Activated CD4-positive, alpha-beta T cell treated with anti-CD3 and anti-CD28 coated beads for 36 hours (primary cell): ENCODE measurements at regions of chr14 and their contacts with region 1.

Region 1: GRCh38 chr14:105020815-105021655 is at the start of gene CDCA4:
- DNase-seq: peak; percentile 99
- ATAC-seq: peak; percentile 82
- H3K4me3 Mint-ChIP-seq: peak within 1 kb of the TSS; percentile 94
- H3K27ac Mint-ChIP-seq: peak within 1 kb of the TSS; percentile 93
- H3K4me1 Mint-ChIP-seq: peaks cover 72% of the 10 kb centered on the region
- H3K27me3 Mint-ChIP-seq: no peaks in the 10 kb centered on the region
- total RNA-seq, gene CDCA4: 52.0 to 62.7 TPM

Region 2: GRCh38 chr14:104689109-104689880 is 331.7 kb before region 1 on chr14 and contains the start of gene INF2:
- CTCF ChIA-PET with region 1: no interaction called
- POLR2A ChIA-PET with region 1: no interaction called
- intact Hi-C with region 1: loop called in 1 of 2 experiments (anchors 1 kb)
- DNase-seq: peak; percentile 73
- ATAC-seq: peak; percentile 69
- H3K4me3 Mint-ChIP-seq: peak within 1 kb of the TSS; percentile 72
- H3K27ac Mint-ChIP-seq: peak within 1 kb of the TSS; percentile 60
- H3K4me1 Mint-ChIP-seq: peaks cover 34% of the 10 kb centered on the region
- H3K27me3 Mint-ChIP-seq: no peaks in the 10 kb centered on the region
- total RNA-seq, gene INF2: 60.8 to 66.0 TPM

Region 3: DNA sequence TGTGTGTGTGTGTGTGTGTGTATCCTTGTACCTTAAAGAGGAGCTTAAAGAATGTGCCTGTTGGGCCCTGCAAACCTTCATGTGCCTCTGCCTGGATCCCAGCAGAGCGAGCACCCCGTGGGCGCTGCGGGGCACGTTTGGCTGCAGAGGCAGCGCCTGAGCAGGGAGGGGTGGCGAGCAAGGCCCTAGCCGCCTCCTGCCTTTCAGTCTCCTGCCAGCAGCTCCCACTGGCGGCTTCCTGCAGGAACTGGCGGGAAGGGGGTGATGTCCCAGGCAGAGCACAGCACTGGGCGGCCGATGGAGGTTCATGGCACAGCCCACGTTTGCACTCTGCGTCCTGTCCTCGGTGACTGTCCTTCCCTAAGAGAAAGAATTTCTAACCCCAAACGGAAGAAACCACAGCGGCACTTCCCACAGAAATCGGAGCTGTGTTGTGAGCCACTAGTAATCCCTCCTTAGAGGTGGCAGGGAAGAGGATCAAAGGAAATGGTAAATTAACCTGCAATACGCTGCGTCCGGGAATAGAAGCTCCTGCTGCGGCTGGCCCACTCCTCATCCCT is 200.3 kb before region 1 on chr14:
- CTCF ChIA-PET with region 1: no interaction called
- POLR2A ChIA-PET with region 1: no interaction called
- intact Hi-C with region 1: no loop called
- DNase-seq: no peak
- ATAC-seq: no peak
- H3K4me3 Mint-ChIP-seq: no peak overlapping the region
- H3K27ac Mint-ChIP-seq: no peak overlapping the region
- H3K4me1 Mint-ChIP-seq: peaks cover 3% of the 10 kb centered on the region
- H3K27me3 Mint-ChIP-seq: peaks cover 11% of the 10 kb centered on the region

Region 4: GRCh38 chr14:104976198-104977007 is 44.6 kb before region 1 on chr14:
- CTCF ChIA-PET with region 1: no interaction called
- POLR2A ChIA-PET with region 1: no interaction called
- intact Hi-C with region 1: loop called in 1 of 2 experiments (anchors 1 kb)
- DNase-seq: peak; percentile 92
- ATAC-seq: peak; percentile 86
- H3K4me3 Mint-ChIP-seq: peak overlapping the region; percentile 19
- H3K27ac Mint-ChIP-seq: no peak overlapping the region
- H3K4me1 Mint-ChIP-seq: peaks cover 6% of the 10 kb centered on the region
- H3K27me3 Mint-ChIP-seq: peaks cover 16% of the 10 kb centered on the region

Region 5: DNA sequence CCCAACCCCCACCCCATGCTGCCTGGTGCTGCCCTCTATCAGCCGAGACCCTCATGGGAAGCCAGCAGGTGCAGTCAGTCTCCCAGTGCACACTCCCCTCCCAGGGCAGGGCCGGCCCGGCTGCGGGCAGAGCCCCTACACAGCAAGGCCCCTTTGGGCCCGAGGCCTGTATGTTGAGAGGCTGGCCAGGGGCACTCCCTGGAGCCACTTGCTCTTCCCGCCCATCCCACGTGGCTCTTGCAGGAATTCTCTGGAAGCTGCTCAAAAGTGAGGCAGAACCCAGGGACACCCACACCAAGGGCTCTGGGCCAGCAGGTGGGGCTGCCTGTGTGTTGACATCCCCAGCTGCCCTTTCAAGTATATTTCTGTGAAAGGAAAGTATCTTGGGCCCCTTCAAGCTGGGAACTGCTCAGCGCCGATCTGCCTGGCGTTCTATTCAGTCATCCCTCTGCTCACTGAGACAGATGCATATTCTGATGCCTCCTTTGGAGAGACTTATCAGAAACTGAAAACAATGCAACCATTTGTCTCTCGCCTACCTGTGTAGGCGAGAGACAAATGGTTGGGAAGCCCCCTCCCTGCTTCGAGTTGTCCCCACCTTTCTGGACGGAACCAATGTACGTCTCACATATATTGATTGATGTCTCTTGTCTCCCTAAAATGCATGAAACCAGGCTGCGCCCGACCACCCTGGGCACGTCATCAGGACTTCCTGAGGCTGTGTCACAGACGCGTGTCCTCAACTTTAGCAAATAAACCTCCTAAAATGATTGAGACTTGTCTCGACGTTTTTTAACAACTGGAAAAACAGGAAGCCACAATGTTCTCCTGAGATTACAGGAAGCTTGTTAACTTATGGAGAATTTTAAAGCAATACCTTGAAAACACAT is 38.2 kb after region 1 on chr14:
- CTCF ChIA-PET with region 1: interaction called, 6 read pairs
- POLR2A ChIA-PET with region 1: interaction called, 6 read pairs
- intact Hi-C with region 1: loop called (anchors 1 to 2 kb)
- DNase-seq: peak; percentile 83
- ATAC-seq: peak; percentile 67
- H3K4me3 Mint-ChIP-seq: peak overlapping the region; percentile 92
- H3K27ac Mint-ChIP-seq: peak overlapping the region; percentile 88
- H3K4me1 Mint-ChIP-seq: peaks cover 48% of the 10 kb centered on the region
- H3K27me3 Mint-ChIP-seq: no peaks in the 10 kb centered on the region

Region 6: GRCh38 chr14:105180592-105181548 is 159.8 kb after region 1 on chr14 and contains the start of gene NUDT14:
- CTCF ChIA-PET with region 1: interaction called, 3 read pairs
- POLR2A ChIA-PET with region 1: no interaction called
- intact Hi-C with region 1: loop called in 1 of 2 experiments (anchors 1 kb)
- DNase-seq: peak; percentile 93
- ATAC-seq: peak; percentile 90
- H3K4me3 Mint-ChIP-seq: peak within 1 kb of the TSS; percentile 69
- H3K27ac Mint-ChIP-seq: no peak within 1 kb of the TSS
- H3K4me1 Mint-ChIP-seq: peaks cover 10% of the 10 kb centered on the region
- H3K27me3 Mint-ChIP-seq: no peaks in the 10 kb centered on the region
- total RNA-seq, gene NUDT14: 12.3 to 13.5 TPM